ENCODE measurements at regions of chr15 and their contacts with region 1.

Region 1: GRCh38 chr15:65414841-65415621 is 7.7 kb downstream of the IGDCC4 start:
- DNase-seq: no peak

Region 2: DNA sequence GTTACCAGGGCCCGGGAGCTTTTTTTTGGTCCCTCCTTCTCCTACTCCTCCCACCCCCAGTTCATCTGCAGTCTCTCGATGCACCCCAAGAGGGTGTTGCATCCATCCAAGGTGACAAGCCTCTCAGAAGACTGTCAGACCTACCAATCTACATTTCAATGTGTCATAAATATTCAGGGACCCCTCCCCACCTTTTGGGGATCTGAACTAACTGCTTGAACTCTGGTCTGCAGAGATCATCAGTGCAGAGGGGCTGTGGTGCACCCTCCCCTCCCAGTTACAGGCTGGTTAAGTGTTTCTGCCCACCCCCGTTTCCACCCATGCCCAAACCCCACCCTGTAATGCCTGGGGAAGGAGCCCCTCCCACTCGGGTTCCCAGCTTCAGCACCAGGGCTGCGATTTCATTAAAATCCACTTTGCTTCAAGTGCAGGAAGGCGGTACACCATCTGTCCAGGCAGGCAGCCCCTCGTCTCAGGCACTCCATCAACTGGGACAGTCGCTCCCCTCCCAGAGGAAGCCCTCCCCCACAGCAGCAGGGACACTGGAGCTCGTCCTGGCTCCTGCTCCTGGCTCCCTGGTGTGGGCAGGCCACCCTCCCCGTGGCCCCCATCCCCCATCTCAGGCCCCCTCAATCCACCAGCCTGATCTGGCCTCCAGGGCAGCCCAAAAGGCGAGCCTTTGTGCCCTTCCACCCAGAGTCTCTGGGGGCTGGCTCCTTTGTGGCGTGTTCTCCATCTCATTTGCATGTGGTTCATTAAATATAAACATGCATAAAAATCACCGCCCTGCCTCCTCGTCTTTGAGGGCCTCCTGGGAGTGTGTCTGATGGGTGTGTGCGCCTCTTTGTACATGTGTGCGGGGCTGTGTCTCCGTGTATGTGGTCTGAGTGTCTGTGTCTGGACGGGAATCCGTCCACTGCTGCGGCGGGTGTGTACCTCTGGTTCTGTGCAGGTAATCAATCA is 78.3 kb before region 1 on chr15:
- intact Hi-C with region 1: no loop called
- DNase-seq: peak; percentile 38

Region 3: GRCh38 chr15:65630760-65631159 is 215.7 kb after region 1 on chr15:
- intact Hi-C with region 1: loop called in 1 of 2 experiments (anchors 5 kb)
- DNase-seq: no peak